Activated CD8-positive, alpha-beta memory T cell treated with anti-CD3 and anti-CD28 coated beads, Interleukin-2, amount 10 ng/mL, durations not matched to agents 7 days and 5 days (primary cell): ENCODE measurements at regions of chr10 and their contacts with region 1.

Region 1: GRCh38 chr10:73096449-73097304 is at the start of gene P4HA1:
- DNase-seq: peak; percentile 99
- ATAC-seq: peak; percentile 91
- H3K4me3 Mint-ChIP-seq: peak within 1 kb of the TSS; percentile 93
- H3K27ac Mint-ChIP-seq: peak within 1 kb of the TSS; percentile 89
- H3K4me1 Mint-ChIP-seq: peaks cover 33% of the 10 kb centered on the region
- H3K27me3 Mint-ChIP-seq: no peaks in the 10 kb centered on the region
- total RNA-seq, gene P4HA1: 29.8 to 30.5 TPM

Region 2: DNA sequence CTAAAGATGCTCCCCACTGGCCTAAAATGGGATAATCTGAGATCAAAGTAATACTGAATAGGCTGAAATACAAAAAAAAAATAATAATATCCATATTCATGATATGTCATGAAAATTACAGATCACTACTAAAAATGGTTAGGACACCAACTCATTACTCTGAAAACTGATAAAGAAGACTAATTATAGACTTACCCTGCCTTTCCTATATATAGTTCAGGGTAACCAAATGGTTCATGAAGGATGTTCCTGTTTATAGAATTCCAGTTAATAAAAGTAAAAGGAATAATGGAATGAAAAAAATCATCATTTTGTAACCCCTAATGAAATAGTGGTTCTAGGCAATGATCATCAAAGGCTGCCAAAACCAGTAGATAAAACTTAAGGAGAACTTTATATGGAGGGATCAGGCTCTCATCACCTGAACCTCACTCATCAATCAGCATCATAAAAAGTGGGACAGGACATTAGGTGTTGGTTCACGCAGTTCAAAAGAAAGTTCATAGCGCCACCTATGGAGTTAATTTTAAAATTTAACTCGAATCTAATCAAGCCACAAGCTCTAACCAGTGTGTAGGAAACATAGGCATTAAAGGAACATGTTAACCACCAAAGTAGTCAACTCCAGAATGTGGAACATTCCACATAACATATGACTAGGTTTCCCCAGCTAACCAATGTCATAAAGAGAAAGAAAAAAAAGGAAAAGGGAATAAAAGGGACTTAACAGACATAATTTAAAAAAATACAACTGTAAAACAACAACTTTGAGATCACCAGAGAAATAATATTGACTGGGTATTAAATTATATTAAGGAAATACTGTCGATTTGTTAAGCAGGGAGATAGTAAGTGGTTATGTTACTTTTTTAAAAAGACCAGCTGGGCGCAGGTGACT is 35.7 kb before region 1 on chr10:
- CTCF ChIA-PET with region 1: interaction called, 14 read pairs
- DNase-seq: no peak
- ATAC-seq: peak; percentile 72
- H3K4me3 Mint-ChIP-seq: no peak overlapping the region
- H3K27ac Mint-ChIP-seq: peak overlapping the region; percentile 65
- H3K4me1 Mint-ChIP-seq: peaks cover 15% of the 10 kb centered on the region
- H3K27me3 Mint-ChIP-seq: no peaks in the 10 kb centered on the region

Region 3: GRCh38 chr10:73076360-73077183 is 20.1 kb before region 1 on chr10:
- CTCF ChIA-PET with region 1: interaction called, 22 read pairs
- DNase-seq: no peak
- ATAC-seq: peak; percentile 84
- H3K4me3 Mint-ChIP-seq: peak overlapping the region; percentile 51
- H3K27ac Mint-ChIP-seq: peak overlapping the region; percentile 81
- H3K4me1 Mint-ChIP-seq: peaks cover 20% of the 10 kb centered on the region
- H3K27me3 Mint-ChIP-seq: no peaks in the 10 kb centered on the region

Region 4: DNA sequence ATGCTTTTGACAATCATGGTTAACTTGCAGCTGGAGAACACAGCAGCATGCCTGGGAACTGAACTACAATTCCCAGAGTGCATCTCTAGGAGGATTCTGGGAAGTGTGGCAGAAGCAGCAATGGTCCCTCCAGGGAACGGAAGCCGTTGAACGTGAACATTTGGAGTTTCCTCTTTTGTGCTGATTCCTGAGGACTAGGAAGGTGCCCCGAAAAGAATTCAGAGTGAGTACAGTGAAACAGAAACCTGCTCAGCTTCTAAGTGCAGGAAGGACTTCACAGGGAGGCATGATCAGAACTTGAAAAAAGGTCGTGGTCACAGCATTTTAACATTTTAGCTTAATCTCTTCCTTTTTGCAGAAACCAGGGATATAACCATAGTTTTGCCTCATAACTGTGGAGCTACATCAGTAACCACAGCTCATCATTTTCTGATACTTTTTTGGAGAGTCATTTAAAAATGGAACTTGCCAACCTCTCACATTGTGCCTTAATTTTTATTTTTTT is 13.7 kb after region 1 on chr10 and contains the start of gene NUDT13:
- CTCF ChIA-PET with region 1: interaction called, 35 read pairs
- DNase-seq: peak; percentile 63
- ATAC-seq: peak; percentile 74
- H3K4me3 Mint-ChIP-seq: peak within 1 kb of the TSS; percentile 81
- H3K27ac Mint-ChIP-seq: peak within 1 kb of the TSS; percentile 86
- H3K4me1 Mint-ChIP-seq: peaks cover 14% of the 10 kb centered on the region
- H3K27me3 Mint-ChIP-seq: no peaks in the 10 kb centered on the region
- total RNA-seq, gene NUDT13: 1.2 TPM

Region 5: DNA sequence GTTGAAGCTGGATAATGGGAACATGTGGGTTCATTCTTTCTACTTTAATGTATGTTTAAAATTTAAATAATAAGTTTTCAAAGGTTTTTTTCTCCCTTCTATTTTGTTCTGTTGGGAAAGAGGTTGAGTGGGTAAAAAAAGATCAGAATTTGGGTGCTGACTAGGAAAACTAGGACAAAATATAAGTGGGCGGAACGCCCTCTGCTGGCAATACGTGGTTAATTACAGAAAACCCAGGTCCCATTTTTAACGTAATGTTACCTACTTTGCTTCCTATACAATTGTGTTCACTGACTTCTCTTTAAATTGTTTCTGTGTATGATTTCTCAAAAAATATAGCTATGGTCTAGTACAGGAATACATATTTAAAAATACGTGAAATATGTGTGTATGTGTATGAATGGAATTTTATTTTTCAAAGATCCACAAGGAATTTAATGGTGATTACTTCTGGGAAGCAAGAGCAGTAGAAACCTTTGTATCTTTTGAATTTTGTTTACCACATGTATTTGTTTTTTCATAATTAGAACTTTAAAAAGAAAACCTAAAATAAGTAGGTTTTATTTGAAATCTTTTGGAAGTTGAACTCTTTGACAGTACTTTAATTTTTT is 62.5 kb after region 1 on chr10:
- CTCF ChIA-PET with region 1: interaction called, 51 read pairs
- DNase-seq: peak; percentile 66
- ATAC-seq: peak; percentile 60
- H3K4me3 Mint-ChIP-seq: no peak overlapping the region
- H3K27ac Mint-ChIP-seq: no peak overlapping the region
- H3K4me1 Mint-ChIP-seq: peaks cover 33% of the 10 kb centered on the region
- H3K27me3 Mint-ChIP-seq: no peaks in the 10 kb centered on the region

Region 6: DNA sequence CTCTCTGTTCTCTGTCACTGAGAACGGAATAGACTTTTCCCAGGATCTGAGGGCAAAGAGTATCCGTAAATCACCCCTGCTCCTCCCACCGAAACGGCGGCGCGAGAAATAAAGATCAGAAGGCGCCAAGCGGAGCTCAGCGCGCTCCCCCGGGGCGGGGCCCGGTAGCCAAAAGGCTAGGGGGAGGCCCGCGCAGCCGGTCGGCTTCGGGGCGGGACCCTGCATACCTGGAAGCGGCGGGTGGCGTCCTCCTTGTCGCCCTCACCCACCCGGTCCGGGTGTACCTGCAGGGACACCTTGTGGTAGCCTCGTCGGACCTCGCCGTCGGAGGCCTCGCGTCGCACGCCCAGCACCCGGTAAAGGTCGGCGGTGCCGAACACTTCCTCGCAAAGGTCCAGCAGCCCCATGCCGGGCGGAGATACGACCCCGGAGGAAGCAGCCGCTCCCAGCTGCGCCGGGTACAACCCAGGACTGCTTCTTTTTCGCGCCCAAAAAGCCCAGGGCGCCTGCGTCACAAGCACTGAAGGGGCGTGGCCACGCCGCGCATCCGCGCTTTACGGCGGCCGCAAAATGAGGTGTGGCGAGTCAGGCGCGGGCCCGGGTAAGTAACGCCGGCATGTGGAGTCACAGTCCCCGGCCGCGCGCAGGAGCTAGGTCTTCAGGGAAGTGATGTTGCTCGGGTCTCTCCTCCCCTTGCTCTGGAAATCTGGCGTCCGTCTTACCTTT is 150.3 kb after region 1 on chr10 and contains the start of gene DNAJC9:
- CTCF ChIA-PET with region 1: interaction called, 12 read pairs
- DNase-seq: peak; percentile 98
- ATAC-seq: peak; percentile 95
- H3K4me3 Mint-ChIP-seq: peak within 1 kb of the TSS; percentile 96
- H3K27ac Mint-ChIP-seq: peak within 1 kb of the TSS; percentile 96
- H3K4me1 Mint-ChIP-seq: peaks cover 67% of the 10 kb centered on the region
- H3K27me3 Mint-ChIP-seq: no peaks in the 10 kb centered on the region
- total RNA-seq, gene DNAJC9: 63.5 to 65.1 TPM